Heart left ventricle (tissue), 16 donors: ENCODE measurements at regions of chr14 and their contacts with region 1.

Region 1: GRCh38 chr14:103594265-103594664 is 31.5 kb downstream of the COA8 start:
- DNase-seq: peak in 4 of 5 donors; percentile 43 to 61 (median 54)
- ATAC-seq: peak; percentile 37 to 75 (median 67)
- H3K4me3 ChIP-seq: peak overlapping the region in 4 of 12 donors; percentile 4 to 14 (median 8)
- H3K27ac ChIP-seq: peak overlapping the region in 11 of 12 donors; percentile 37 to 61 (median 50)
- H3K4me1 ChIP-seq: peaks cover 0 to 37% (median 22%) of the 10 kb centered on the region in 12 donors
- H3K27me3 ChIP-seq: no peaks in the 10 kb centered on the region
- CTCF ChIP-seq: no peak
- POLR2A ChIP-seq: no peak

Region 2: GRCh38 chr14:103628684-103629502 is 34.6 kb after region 1 on chr14 and contains the start of gene KLC1:
- intact Hi-C with region 1: loop called in 1 of 10 experiments (anchors 1 kb)
- DNase-seq: peak; percentile 88 to 94 (median 91)
- ATAC-seq: peak; percentile 51 to 86 (median 80)
- H3K4me3 ChIP-seq: peak within 1 kb of the TSS; percentile 83 to 100 (median 95)
- H3K27ac ChIP-seq: peak within 1 kb of the TSS; percentile 97 to 100 (median 99)
- H3K4me1 ChIP-seq: peaks cover 6 to 75% (median 59%) of the 10 kb centered on the region in 12 donors
- H3K27me3 ChIP-seq: no peaks in the 10 kb centered on the region
- CTCF ChIP-seq: peak in 3 of 12 donors; percentile 7 to 17 (median 14)
- POLR2A ChIP-seq: peak in 1 of 2 donors; percentile 85
- total RNA-seq, gene KLC1: 127 to 241 (median 150) TPM